ENCODE measurements at regions of chr1 and their contacts with region 1.

Region 1: GRCh38 chr1:52842643-52843309 is at the start of gene ZYG11A:
- DNase-seq: peak; percentile 75
- H3K4me3 Mint-ChIP-seq: peak within 1 kb of the TSS; percentile 77
- H3K27ac Mint-ChIP-seq: no peak within 1 kb of the TSS
- H3K4me1 Mint-ChIP-seq: peaks cover 8% of the 10 kb centered on the region
- H3K27me3 Mint-ChIP-seq: peaks cover 34% of the 10 kb centered on the region
- total RNA-seq, gene ZYG11A: 0.22 and 0.26 TPM in 2 replicates

Region 2: DNA sequence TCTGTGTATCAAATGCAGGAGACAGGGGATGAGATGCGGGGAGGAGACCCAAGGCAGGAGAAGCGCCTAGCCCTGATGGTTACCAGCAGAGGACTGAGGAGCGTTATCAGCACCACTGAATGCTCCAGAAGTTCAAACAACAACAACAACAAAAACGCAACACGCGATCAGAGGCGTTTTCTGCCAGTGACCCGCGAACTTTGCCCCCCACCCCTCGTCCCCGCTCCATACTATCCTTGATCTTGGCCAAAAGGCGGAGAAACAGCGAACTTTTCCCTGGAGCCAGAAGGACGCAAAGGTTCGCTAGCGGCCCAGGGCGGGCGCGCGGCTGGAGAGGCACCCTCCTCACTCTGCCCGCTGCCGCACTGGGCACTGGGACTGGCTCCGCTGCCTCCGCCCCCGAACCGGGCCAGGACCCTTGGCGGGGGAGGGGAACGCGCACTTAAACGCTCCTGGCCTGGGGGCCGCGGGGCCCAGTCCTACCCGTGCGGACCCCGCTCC is 78.1 kb after region 1 on chr1:
- intact Hi-C with region 1: loop called (anchors 2 kb)
- DNase-seq: no peak
- H3K4me3 Mint-ChIP-seq: peak overlapping the region; percentile 86
- H3K27ac Mint-ChIP-seq: no peak overlapping the region
- H3K4me1 Mint-ChIP-seq: peaks cover 14% of the 10 kb centered on the region
- H3K27me3 Mint-ChIP-seq: peaks cover 2% of the 10 kb centered on the region

Measured in activated T-helper 1 cell treated with anti-CD3 and anti-CD28 coated beads, Interleukin-12 subunit alpha, Interleukin-12 subunit beta, Interleukin-2, Interleukin-4 antibody, amounts not matched to agents 30 ng/mL and 10 ng/mL and 1 ng/mL, durations not matched to agents 14 hours and 24 hours and 36 hours (primary cell).